Ascending aorta (tissue), 2 donors: ENCODE measurements at regions of chr6 and their contacts with region 1.

Region 1: DNA sequence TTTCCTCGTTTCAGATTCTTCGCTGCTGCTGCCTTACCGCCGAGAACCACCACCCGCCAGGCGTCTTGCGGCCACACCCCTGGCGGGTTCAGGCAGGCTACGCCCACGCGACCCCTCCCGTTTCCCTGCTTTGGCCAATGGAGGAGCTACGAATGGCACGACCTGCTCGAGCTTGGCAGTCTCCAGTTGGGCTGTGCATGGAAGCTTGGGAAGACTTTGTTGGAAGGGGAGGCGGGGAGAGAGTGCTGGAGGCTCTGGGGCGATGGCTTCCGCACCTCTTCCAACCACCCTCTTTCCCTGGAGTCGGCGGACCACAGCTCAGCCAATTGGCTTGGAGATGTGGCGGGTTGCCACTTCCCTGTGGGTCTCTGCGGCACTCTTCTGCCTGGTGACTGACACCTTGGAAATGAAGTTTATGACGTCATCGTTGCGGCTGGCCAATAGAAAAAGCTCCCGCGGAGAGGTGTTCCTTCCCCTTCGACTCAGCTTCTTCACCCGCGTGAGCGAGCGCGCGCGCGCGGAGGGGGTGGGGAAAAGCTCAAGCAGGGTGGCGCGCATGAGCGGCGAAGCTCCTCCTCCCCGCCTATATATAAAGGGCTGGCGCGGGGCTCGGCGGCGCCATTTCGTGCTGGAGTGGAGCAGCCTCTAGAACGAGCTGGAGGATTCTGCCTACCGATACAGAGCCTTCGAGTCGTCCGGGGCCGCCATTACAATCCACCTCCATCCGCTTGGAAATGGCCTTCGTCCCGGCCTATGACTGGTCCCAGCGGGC is 3.4 kb downstream of the BRD2 start:
- DNase-seq: peak; percentile 99 to 100
- H3K4me3 ChIP-seq: peak overlapping the region; percentile 86 to 95
- H3K27ac ChIP-seq: peak overlapping the region; percentile 98 to 99
- H3K4me1 ChIP-seq: peaks cover 3 to 26% of the 10 kb centered on the region in 2 donors
- H3K27me3 ChIP-seq: no peaks in the 10 kb centered on the region
- CTCF ChIP-seq: peak in 1 of 3 experiments; percentile 19

Region 2: DNA sequence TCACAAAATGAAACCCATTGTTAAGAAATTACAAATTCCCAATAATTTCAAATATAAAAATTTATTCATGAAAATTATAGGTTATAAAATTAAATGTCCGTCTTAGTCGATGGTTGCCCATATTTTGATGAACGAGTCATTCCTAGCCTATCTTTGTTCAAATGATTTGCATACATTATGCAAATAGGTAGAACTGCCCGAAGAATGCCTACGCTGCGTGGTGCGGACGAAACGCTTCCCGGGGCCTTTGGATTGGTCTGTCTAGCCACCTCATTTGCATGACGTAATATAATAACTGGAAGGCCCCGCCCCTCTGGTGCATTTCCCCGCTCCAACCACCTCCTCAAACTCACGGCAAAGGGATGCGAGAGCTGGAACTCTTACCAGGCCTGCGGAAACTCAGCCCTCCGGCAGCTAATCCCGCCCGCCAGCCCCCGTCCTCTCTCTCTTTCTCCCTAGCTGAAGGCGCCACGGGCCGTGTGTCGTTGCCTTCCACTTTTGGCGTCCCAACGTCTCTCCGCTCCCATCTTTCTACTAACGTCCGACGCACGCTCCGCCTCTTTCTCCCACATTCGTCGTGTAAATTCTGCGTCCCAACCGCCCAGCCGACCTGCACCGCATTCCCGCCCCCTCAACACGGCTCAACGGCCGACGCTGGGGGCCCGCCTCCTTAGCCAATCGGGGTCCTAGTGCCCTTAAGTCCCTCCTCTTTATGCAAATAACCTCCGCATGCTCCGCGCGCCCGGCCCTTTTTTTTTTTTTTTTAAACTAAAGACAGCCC is 1351.8 kb before region 1 on chr6:
- intact Hi-C with region 1: loop called (anchors 10 kb)
- DNase-seq: peak; percentile 97 to 99
- H3K4me3 ChIP-seq: peak overlapping the region; percentile 76 to 93
- H3K27ac ChIP-seq: peak overlapping the region; percentile 98 to 99
- H3K4me1 ChIP-seq: peaks cover 8 to 9% of the 10 kb centered on the region in 2 donors
- H3K27me3 ChIP-seq: no peaks in the 10 kb centered on the region
- CTCF ChIP-seq: no peak

Region 3: DNA sequence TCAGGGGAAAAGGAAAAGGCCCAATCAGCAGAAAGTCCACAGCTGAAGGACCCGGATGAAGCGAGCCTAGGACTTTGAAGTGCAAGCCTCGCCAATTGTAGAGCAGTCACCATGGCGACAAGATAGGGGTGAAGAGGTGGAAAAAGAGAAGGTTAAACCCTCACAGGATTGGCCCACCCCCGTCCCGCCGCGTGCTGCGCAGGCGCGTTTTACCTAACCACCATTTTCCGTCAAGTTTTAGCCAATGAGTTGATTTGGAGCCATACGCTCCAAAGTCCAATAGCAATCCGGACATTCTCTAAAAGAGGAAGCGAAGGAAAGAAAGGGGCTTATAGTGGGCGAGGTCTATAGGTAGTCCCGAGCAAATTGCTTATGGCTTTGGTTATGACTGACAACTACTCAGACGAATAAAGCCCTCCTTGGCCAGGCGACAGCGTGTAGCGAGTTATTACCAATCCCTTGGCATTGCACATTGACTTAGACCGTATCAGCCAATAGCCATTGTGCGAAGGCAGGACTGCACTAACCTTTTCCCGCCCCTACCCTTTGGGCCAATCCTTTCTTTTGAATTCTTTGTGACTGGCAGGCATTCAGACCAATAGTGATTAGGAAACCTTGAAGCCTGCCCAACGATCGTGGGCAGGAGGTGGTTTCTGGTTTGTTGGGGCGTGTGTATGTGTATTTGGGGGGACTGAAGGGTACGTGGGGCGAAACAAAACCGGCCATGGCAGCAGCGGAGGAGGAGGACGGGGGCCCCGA is 793.8 kb before region 1 on chr6 and contains the start of gene RNF5:
- intact Hi-C with region 1: loop called (anchors 5 kb)
- DNase-seq: peak; percentile 96 to 99
- H3K4me3 ChIP-seq: peak within 1 kb of the TSS; percentile 73 to 99
- H3K27ac ChIP-seq: peak within 1 kb of the TSS; percentile 87 to 92
- H3K4me1 ChIP-seq: peaks cover 9 to 27% of the 10 kb centered on the region in 2 donors
- H3K27me3 ChIP-seq: no peaks in the 10 kb centered on the region
- CTCF ChIP-seq: no peak
- total RNA-seq, gene RNF5: 73.0 TPM

Region 4: DNA sequence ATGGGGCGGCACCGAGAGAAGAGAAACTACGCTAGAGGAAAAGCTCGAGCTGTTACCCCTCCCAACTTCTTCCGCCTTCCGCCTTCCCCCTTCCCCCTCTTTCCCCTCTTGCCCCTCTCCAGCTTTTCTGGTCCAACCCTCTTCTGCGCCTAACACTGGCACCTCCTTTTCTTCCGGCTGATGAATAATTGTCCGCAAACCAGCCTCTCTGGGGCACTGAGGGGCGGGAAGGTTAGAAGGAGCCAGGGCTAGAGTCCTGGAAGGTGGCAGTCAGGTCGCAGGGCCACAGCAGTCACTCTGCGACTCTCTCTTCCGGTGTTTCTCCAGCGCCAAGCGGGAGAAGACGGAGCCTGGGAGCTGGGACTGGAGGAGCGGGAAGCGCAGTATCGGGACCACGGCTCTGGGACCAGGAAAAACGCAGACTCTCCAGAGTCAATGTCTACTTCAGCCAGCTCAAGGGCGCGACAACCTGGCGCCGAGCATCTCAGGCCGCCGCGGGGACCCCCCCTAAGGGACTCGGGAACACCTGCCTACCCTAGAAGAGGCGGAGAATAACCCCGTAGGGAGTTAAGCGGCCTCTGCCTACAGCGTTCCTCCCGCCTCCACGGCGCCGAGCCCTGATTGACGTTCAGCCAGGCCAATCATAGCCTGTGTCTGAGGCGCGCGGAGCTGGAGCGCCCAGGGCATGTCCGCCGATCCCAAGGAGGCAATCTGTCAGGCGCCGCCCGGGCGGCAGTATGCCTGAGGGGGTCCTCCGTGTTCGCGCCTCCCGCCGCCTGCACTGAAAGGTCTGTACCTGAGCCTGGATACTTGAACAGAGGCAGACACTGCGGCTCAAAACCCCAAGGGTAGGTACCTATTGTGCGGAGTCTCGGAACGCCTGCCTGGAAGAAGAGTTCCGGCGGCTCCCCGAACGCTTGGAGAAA is 77.4 kb before region 1 on chr6:
- intact Hi-C with region 1: loop called (anchors 2 kb)
- DNase-seq: peak; percentile 67 to 94
- H3K4me3 ChIP-seq: peak overlapping the region; percentile 78 to 94
- H3K27ac ChIP-seq: peak overlapping the region; percentile 86 to 92
- H3K4me1 ChIP-seq: peaks cover 5 to 8% of the 10 kb centered on the region in 2 donors
- H3K27me3 ChIP-seq: no peaks in the 10 kb centered on the region
- CTCF ChIP-seq: no peak

Region 5: GRCh38 chr6:32940656-32941213 is 31.0 kb before region 1 on chr6 and contains the start of gene HLA-DMB:
- intact Hi-C with region 1: loop called (anchors 2 kb)
- DNase-seq: peak in 1 of 2 donors; percentile 84
- H3K4me3 ChIP-seq: peak within 1 kb of the TSS; percentile 33 to 56
- H3K27ac ChIP-seq: peak within 1 kb of the TSS; percentile 41 to 50
- H3K4me1 ChIP-seq: peaks cover 0 to 3% of the 10 kb centered on the region in 2 donors
- H3K27me3 ChIP-seq: no peaks in the 10 kb centered on the region
- CTCF ChIP-seq: no peak
- total RNA-seq, gene HLA-DMB: 26.8 TPM

Region 6: GRCh38 chr6:33200219-33201146 is 228.7 kb after region 1 on chr6 and contains the starts of genes RXRB and SLC39A7:
- intact Hi-C with region 1: loop called (anchors 5 kb)
- DNase-seq: peak; percentile 99 to 100
- H3K4me3 ChIP-seq: peak within 1 kb of the TSS; percentile 90 to 91
- H3K27ac ChIP-seq: peak within 1 kb of the TSS; percentile 95 to 97
- H3K4me1 ChIP-seq: peaks cover 16 to 32% of the 10 kb centered on the region in 2 donors
- H3K27me3 ChIP-seq: no peaks in the 10 kb centered on the region
- CTCF ChIP-seq: no peak
- total RNA-seq, gene RXRB: 21.6 TPM
- total RNA-seq, gene SLC39A7: 59.7 TPM

Region 7: GRCh38 chr6:33417903-33418689 is 446.3 kb after region 1 on chr6 and contains the start of gene CUTA:
- intact Hi-C with region 1: loop called (anchors 10 kb)
- DNase-seq: peak; percentile 99 to 100
- H3K4me3 ChIP-seq: peak within 1 kb of the TSS; percentile 82 to 85
- H3K27ac ChIP-seq: peak within 1 kb of the TSS; percentile 95
- H3K4me1 ChIP-seq: peaks cover 13 to 30% of the 10 kb centered on the region in 2 donors
- H3K27me3 ChIP-seq: no peaks in the 10 kb centered on the region
- CTCF ChIP-seq: peak in 2 of 3 experiments; percentile 22 to 32
- total RNA-seq, gene CUTA: 77.2 TPM